PC-9 (cell line): ENCODE measurements at regions of chr17 and their contacts with region 1.

Region 1: GRCh38 chr17:45148183-45149036 is at the start of gene HEXIM1:
- DNase-seq: peak; percentile 98
- H3K4me3 ChIP-seq: peak within 1 kb of the TSS; percentile 86
- H3K27ac ChIP-seq: peak within 1 kb of the TSS; percentile 92
- H3K4me1 ChIP-seq: peaks cover 27% of the 10 kb centered on the region
- H3K27me3 ChIP-seq: no peaks in the 10 kb centered on the region
- CTCF ChIP-seq: no peak
- total RNA-seq, gene HEXIM1: 49.3 and 64.9 TPM in 2 replicates

Region 2: DNA sequence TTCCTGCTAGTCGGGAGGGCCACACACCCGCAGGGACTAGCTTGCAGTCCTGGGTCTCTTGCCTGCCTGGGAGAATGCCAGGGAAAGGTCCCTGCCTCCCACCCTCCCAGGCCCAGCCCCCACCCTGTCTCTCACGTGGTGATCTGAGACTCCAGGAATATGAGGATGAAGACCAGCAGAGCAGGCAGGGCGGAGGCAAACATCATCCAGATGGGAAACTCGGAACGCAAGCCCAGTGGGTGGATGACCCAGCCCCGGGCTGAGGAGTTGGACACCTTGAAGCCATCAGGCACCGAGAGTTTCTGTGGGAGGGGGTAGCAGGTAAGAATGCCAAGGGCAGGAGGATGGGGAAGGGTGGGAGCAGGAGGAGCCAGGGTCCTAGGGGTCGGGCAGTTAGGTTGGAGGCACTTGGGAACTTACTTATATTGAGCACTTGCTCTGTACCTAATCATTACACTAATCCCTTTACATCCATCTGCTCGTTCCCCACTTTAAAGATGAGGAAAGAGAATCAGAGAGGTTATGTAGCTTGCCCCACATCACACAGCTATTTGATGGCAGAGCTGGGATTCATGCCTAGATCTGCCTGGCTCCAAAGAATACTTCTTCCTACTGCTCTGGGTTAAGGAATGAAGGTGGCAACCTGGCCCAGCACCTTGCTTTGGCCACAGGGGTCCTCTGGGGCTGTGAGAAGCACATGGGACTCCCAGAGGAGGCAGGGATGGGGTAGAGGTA is 893.9 kb before region 1 on chr17:
- CTCF ChIA-PET with region 1: no interaction called
- POLR2A ChIA-PET with region 1: interaction called, 12 read pairs
- intact Hi-C with region 1: no loop called
- DNase-seq: no peak
- H3K4me3 ChIP-seq: no peak overlapping the region
- H3K27ac ChIP-seq: no peak overlapping the region
- H3K4me1 ChIP-seq: no peaks in the 10 kb centered on the region
- H3K27me3 ChIP-seq: peaks cover 30% of the 10 kb centered on the region
- CTCF ChIP-seq: no peak

Region 3: DNA sequence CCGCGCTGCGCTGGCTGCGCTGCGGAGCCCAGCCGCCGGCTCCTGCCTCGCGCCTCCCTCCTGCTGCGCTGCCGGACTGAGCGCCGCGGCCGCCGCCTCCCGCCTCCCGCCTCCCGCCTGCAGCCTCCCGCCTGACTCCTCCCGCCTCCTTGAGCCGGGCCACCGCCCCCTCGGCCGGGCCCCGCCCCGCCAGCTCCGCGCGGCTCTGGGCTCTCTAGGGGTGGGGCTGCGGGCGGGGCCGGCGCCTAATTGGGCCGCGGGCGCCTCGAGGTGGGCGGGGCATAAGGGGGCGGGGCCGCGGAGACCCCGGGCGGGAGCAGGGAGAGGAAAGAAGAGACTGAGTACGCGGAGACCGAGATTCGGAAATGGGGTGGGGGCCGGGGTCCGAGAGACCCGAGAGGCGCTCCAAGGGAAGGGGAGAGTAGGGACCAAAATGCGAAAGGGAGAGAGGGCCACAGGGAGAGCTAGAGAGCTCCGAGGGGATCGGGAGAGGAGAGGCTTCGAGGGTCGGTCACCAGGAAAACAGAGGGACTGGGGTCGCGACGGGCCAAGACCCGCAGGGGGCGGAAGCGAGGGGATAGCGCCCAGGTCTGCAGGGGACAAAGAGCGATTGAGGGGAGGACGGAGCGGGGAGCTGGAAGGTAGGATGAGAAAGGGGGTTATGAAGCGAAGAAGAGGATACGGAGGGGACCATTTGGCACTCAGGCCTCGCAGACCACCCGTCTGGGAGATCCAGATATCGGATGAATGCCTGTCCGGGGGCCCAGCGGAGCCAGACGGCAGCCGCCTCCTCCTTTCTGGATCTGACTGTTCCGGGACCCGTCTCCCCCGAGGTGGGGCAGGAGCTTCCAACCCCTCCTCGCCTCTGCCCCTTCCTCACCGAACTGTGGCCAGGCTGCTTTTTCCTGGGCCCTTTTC is 179.9 kb before region 1 on chr17 and contains the start of gene C1QL1:
- CTCF ChIA-PET with region 1: no interaction called
- POLR2A ChIA-PET with region 1: interaction called, 18 read pairs
- intact Hi-C with region 1: no loop called
- DNase-seq: peak; percentile 63 to 89
- H3K4me3 ChIP-seq: peak within 1 kb of the TSS; percentile 47
- H3K27ac ChIP-seq: no peak within 1 kb of the TSS
- H3K4me1 ChIP-seq: no peaks in the 10 kb centered on the region
- H3K27me3 ChIP-seq: peaks cover 17% of the 10 kb centered on the region; the same call in 1 of the 2 replicates
- CTCF ChIP-seq: no peak
- total RNA-seq, gene C1QL1: 0.93 and 1.3 TPM in 2 replicates

Region 4: GRCh38 chr17:45161019-45161825 is 12.8 kb after region 1 on chr17:
- CTCF ChIA-PET with region 1: interaction called, 11 read pairs
- POLR2A ChIA-PET with region 1: interaction called, 39 read pairs
- intact Hi-C with region 1: loop called (anchors 1 kb)
- DNase-seq: peak; percentile 98 to 99
- H3K4me3 ChIP-seq: peak overlapping the region; percentile 73
- H3K27ac ChIP-seq: peak overlapping the region; percentile 93
- H3K4me1 ChIP-seq: peaks cover 55% of the 10 kb centered on the region
- H3K27me3 ChIP-seq: no peaks in the 10 kb centered on the region
- CTCF ChIP-seq: no peak; the same call in 1 of the 2 replicates

Region 5: GRCh38 chr17:45197555-45198334 is 49.3 kb after region 1 on chr17:
- CTCF ChIA-PET with region 1: interaction called, 66 read pairs
- POLR2A ChIA-PET with region 1: interaction called, 31 read pairs
- intact Hi-C with region 1: loop called (anchors 1 kb)
- DNase-seq: peak; percentile 83 to 97
- H3K4me3 ChIP-seq: no peak overlapping the region
- H3K27ac ChIP-seq: peak overlapping the region; percentile 52
- H3K4me1 ChIP-seq: peaks cover 36% of the 10 kb centered on the region
- H3K27me3 ChIP-seq: no peaks in the 10 kb centered on the region
- CTCF ChIP-seq: peak; percentile 99

Region 6: GRCh38 chr17:45302649-45303173 is 154.3 kb after region 1 on chr17:
- CTCF ChIA-PET with region 1: no interaction called
- POLR2A ChIA-PET with region 1: no interaction called
- intact Hi-C with region 1: no loop called
- DNase-seq: no peak
- H3K4me3 ChIP-seq: no peak overlapping the region
- H3K27ac ChIP-seq: no peak overlapping the region
- H3K4me1 ChIP-seq: peaks cover 11% of the 10 kb centered on the region
- H3K27me3 ChIP-seq: no peaks in the 10 kb centered on the region
- CTCF ChIP-seq: no peak

Region 7: GRCh38 chr17:45371414-45372327 is 223.3 kb after region 1 on chr17:
- CTCF ChIA-PET with region 1: no interaction called
- POLR2A ChIA-PET with region 1: no interaction called
- intact Hi-C with region 1: loop called (anchors 5 kb)
- DNase-seq: peak; percentile 96 to 97
- H3K4me3 ChIP-seq: peak overlapping the region; percentile 45
- H3K27ac ChIP-seq: peak overlapping the region; percentile 99
- H3K4me1 ChIP-seq: peaks cover 73% of the 10 kb centered on the region
- H3K27me3 ChIP-seq: no peaks in the 10 kb centered on the region
- CTCF ChIP-seq: 0 out of 2 replicates have a peak, but pooled peaks have one; percentile 1